Heart left ventricle (tissue), 16 donors: ENCODE measurements at regions of chr4 and their contacts with region 1.

Region 1: GRCh38 chr4:122151982-122152710 is at the start of gene BLTP1:
- DNase-seq: peak; percentile 92 to 96 (median 93)
- ATAC-seq: peak; percentile 98 to 100 (median 100)
- H3K4me3 ChIP-seq: peak within 1 kb of the TSS; percentile 70 to 100 (median 92)
- H3K27ac ChIP-seq: peak within 1 kb of the TSS; percentile 72 to 97 (median 92)
- H3K4me1 ChIP-seq: peaks cover 0 to 40% (median 15%) of the 10 kb centered on the region in 12 donors
- H3K27me3 ChIP-seq: no peaks in the 10 kb centered on the region
- CTCF ChIP-seq: peak in 4 of 12 donors; percentile 7 to 14 (median 8)
- POLR2A ChIP-seq: peak in 1 of 2 donors; percentile 74
- total RNA-seq, gene BLTP1: 29.8 to 53.9 (median 45.5) TPM

Region 2: DNA sequence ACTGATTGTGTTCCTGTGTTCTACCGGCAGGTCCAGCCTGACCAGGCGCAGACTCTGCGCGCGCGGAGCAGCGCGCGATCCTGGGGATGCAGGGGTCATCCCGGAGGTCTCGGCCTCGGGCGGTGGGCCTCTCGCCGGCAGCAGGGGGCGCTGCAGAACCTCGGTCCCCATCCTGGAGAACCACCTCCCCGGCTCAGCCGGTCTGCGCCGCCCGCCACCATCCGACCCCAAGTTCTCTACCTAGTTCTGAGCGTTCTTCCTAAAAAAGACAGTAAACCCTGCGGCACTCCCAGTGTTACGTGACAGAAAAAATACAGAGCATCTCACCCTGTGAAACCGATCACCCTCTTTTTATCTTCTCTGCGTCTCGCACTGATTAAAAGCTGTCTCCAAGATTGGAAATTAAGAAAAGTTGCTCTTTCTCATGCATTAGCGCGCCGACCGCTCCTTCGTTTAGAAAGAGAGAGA is 201.9 kb before region 1 on chr4:
- intact Hi-C with region 1: loop called in 5 of 10 experiments (anchors 2 to 10 kb)
- DNase-seq: peak; percentile 74 to 87 (median 76)
- ATAC-seq: peak; percentile 77 to 96 (median 86)
- H3K4me3 ChIP-seq: peak overlapping the region; percentile 50 to 74 (median 63)
- H3K27ac ChIP-seq: peak overlapping the region in 1 of 12 donors; percentile 13
- H3K4me1 ChIP-seq: peaks cover 0 to 23% (median 7%) of the 10 kb centered on the region in 12 donors
- H3K27me3 ChIP-seq: peaks cover 0 to 47% (median 22%) of the 10 kb centered on the region in 9 donors
- CTCF ChIP-seq: peak; percentile 58 to 86 (median 73)
- POLR2A ChIP-seq: no peak

Region 3: DNA sequence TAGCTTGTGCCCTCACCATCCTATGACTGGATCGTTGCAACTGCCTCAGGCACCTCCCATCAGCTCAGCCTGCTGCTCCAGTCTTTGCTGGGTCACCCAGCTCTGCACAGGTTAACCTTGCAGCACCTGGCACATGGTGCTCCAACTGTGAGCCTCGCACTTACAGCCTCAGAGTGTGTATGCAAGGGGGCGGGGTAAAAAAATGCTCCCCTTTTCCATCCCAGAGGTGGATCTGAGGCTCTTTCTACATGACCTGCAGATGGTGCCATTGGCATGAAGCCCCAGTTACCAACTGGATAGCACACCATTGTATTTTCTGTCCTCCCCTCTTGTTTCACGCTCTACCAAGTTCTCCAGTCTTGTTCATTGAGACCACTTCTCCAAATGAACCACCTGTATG is 154.1 kb before region 1 on chr4:
- intact Hi-C with region 1: loop called in 5 of 10 experiments (anchors 5 to 10 kb)
- DNase-seq: peak in 1 of 5 donors; percentile 25
- ATAC-seq: peak in 2 of 4 donors; percentile 59 to 66
- H3K4me3 ChIP-seq: no peak overlapping the region
- H3K27ac ChIP-seq: no peak overlapping the region
- H3K4me1 ChIP-seq: no peaks in the 10 kb centered on the region
- H3K27me3 ChIP-seq: peaks cover 0 to 7% (median 0%) of the 10 kb centered on the region in 9 donors
- CTCF ChIP-seq: peak in 10 of 12 donors; percentile 11 to 50 (median 36)
- POLR2A ChIP-seq: no peak

Region 4: DNA sequence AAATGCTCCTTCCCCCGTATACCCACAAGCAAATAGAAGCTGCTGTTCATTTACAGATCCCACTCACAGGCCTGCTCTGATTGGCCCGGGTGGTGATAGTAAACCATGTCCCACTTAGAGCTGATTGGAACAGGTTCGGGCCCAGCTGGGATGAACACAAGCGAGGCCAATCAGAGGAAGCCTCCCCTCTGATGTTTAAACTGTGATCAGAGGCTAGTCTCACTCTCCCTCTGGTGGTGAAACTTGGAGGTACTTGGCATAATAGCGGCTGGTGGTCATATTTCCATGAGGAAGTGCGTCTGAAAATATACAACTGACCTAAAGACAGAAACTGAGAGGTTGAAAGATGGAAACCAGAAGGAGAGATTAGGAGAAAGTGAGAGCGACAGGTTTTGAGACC is 148.8 kb before region 1 on chr4:
- intact Hi-C with region 1: loop called in 5 of 10 experiments (anchors 5 to 10 kb)
- DNase-seq: no peak
- ATAC-seq: peak in 1 of 4 donors; percentile 18
- H3K4me3 ChIP-seq: no peak overlapping the region
- H3K27ac ChIP-seq: no peak overlapping the region
- H3K4me1 ChIP-seq: no peaks in the 10 kb centered on the region
- H3K27me3 ChIP-seq: peaks cover 0 to 7% (median 0%) of the 10 kb centered on the region in 9 donors
- CTCF ChIP-seq: peak in 5 of 12 donors; percentile 8 to 23 (median 19)
- POLR2A ChIP-seq: no peak

Region 5: GRCh38 chr4:122010610-122011009 is 141.5 kb before region 1 on chr4:
- intact Hi-C with region 1: loop called in 2 of 10 experiments (anchors 10 kb)
- DNase-seq: no peak
- ATAC-seq: no peak
- H3K4me3 ChIP-seq: no peak overlapping the region
- H3K27ac ChIP-seq: no peak overlapping the region
- H3K4me1 ChIP-seq: peaks cover 0 to 3% (median 0%) of the 10 kb centered on the region in 12 donors
- H3K27me3 ChIP-seq: no peaks in the 10 kb centered on the region
- CTCF ChIP-seq: no peak
- POLR2A ChIP-seq: no peak

Region 6: GRCh38 chr4:122205690-122206089 is 53.5 kb after region 1 on chr4:
- intact Hi-C with region 1: no loop called
- DNase-seq: no peak
- ATAC-seq: peak in 1 of 4 donors; percentile 15
- H3K4me3 ChIP-seq: no peak overlapping the region
- H3K27ac ChIP-seq: no peak overlapping the region
- H3K4me1 ChIP-seq: no peaks in the 10 kb centered on the region
- H3K27me3 ChIP-seq: no peaks in the 10 kb centered on the region
- CTCF ChIP-seq: no peak
- POLR2A ChIP-seq: no peak